ENCODE measurements at regions of chr2 and their contacts with region 1.

Region 1: DNA sequence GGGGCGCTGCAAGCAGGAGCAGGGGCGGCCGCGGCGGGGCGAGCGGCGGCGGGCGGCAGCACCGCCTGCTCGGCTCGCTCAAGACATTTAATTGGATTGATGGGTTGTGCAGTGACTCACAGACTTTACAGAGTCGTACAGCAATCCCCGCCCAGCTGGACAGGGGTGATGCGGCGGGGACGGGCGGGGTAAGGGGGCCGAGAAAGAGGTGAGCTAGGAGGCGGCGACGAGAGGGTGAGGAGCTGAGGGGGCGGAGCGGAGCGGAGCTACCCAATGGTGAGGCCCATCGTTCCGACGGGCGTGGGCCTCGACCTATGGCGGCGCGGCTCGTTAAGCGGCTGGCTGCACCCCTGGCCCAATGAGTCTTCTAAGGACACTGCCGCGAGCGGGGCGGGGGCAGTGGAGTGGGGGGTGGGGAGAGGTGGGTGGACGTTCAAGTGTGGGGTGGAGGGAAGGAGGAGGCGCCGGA is 97.1 kb upstream of the SERTAD2 start:
- DNase-seq: peak; percentile 95
- ATAC-seq: peak; percentile 90
- H3K4me3 Mint-ChIP-seq: peak overlapping the region; percentile 92
- H3K27ac Mint-ChIP-seq: peak overlapping the region; percentile 95
- H3K4me1 Mint-ChIP-seq: peaks cover 16% of the 10 kb centered on the region
- H3K27me3 Mint-ChIP-seq: no peaks in the 10 kb centered on the region

Region 2: DNA sequence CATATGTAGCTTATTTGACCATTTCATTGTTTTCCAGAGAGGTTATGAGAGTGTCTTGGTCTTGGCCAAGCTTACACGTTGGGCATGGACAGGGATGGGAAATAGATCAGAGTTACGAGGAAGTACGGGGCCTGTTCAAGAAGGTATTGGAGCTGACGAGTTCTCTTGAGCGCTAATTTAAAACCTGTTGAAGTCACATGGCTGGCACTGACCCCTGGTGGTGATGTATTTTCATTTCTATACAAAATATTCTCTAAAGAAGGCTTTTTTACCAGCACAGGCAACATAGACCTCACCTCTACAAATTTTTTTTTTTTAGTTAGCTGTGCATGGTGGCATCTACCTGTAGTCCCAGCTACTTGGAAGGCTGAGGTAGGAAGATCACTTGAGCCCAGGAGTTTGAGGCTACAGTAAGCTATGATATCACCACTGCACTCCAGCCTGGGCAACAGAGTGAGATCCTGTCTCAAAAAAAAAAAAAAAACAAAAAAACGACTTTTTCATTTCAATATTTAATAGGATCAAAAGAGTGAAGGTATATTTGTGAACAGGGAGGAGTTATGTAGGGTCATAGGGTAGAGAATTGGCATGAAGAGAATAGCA is 889.5 kb before region 1 on chr2:
- POLR2A ChIA-PET with region 1: no interaction called
- DNase-seq: peak; percentile 34
- ATAC-seq: no peak
- H3K4me3 Mint-ChIP-seq: no peak overlapping the region
- H3K27ac Mint-ChIP-seq: no peak overlapping the region
- H3K4me1 Mint-ChIP-seq: peaks cover 29% of the 10 kb centered on the region
- H3K27me3 Mint-ChIP-seq: no peaks in the 10 kb centered on the region

Region 3: DNA sequence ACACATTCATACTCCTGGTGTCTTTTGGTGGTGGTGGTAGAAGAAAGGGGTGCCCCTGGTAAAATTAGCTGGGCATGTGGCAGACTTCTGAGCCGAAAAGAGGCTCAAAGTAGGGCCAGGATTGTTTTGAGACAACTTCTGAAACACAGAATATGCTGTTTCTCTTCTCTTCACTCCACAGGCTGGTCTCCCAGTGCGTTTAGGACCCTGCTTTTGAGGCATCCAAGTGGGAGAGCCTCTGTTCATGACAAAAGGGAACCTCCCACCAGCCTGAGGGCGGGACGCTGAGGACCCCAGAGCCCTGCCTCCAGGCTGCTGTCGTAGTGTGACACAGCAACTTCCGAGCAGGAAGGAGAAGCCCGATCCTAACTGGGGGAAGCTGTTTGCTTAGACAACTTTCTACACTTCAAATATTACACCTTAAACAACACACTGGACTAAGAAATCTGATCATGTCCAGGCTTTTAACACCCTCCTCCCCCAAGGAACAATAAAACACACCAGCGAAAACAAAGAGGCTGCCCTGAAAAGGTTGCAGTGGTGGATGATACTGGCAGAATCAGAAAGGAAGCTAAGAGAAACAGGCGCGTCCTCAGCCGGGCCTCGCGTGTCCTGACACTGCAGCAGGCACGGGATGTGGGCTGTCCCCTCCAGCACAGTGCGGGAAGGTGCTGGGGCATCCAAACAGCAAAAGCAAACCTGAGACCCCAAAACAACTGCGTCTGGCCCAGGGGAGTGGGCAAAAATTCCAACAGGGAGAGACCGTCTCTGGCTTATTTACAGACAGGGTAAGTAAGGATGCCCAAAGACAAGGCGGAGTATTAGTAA is 106.5 kb before region 1 on chr2:
- POLR2A ChIA-PET with region 1: interaction called, 137 read pairs
- DNase-seq: peak; percentile 69
- ATAC-seq: peak; percentile 87
- H3K4me3 Mint-ChIP-seq: peak overlapping the region; percentile 85
- H3K27ac Mint-ChIP-seq: peak overlapping the region; percentile 87
- H3K4me1 Mint-ChIP-seq: peaks cover 79% of the 10 kb centered on the region
- H3K27me3 Mint-ChIP-seq: no peaks in the 10 kb centered on the region

Region 4: GRCh38 chr2:64666810-64667438 is 83.9 kb before region 1 on chr2:
- POLR2A ChIA-PET with region 1: interaction called, 11 read pairs
- DNase-seq: no peak
- ATAC-seq: peak; percentile 77
- H3K4me3 Mint-ChIP-seq: peak overlapping the region; percentile 46
- H3K27ac Mint-ChIP-seq: peak overlapping the region; percentile 78
- H3K4me1 Mint-ChIP-seq: peaks cover 25% of the 10 kb centered on the region
- H3K27me3 Mint-ChIP-seq: no peaks in the 10 kb centered on the region

Region 5: GRCh38 chr2:64737547-64737946 is 13.3 kb before region 1 on chr2:
- POLR2A ChIA-PET with region 1: interaction called, 39 read pairs
- DNase-seq: no peak
- ATAC-seq: peak; percentile 91
- H3K4me3 Mint-ChIP-seq: peak overlapping the region; percentile 40
- H3K27ac Mint-ChIP-seq: peak overlapping the region; percentile 36
- H3K4me1 Mint-ChIP-seq: peaks cover 29% of the 10 kb centered on the region
- H3K27me3 Mint-ChIP-seq: no peaks in the 10 kb centered on the region

Region 6: DNA sequence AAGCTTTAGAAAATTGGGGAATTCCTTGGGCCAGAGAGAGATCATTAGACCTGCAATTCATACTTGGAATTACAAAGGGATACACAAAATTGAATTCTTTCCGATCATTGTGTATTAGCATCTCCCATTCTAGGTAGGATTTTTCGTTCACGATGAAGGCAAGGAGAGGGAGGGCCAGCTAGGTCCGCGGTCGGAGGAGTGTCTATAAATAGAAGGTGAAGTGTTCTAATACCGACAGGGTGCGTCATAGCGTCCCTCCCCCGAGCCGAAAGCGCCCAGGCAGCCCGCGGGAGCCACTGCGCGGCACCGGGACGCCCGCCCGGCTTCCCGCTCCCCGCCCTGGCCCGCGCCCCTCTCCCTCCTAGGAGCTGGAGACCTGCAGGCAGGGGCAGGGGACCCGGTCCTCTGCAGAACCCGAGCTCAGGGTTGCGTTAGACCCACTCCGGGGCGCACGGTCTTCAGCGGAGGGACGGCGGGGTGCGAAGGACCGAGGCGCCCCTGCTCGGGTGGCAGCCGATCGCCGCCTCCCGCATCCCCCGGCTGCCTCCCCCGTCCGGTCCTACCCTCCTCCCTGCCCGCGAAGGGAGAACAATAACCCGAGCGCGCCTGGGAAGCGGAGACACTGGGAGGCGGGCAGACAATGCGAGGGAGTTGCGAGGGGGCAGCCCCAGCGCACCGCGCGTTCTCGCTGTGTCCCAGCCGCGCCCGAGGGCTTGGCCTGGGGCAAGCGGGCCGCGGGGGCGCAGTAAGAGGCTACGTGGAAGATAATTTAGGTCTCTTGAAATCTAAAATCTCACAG is 17.0 kb after region 1 on chr2:
- POLR2A ChIA-PET with region 1: interaction called, 54 read pairs
- DNase-seq: peak; percentile 83
- ATAC-seq: peak; percentile 85
- H3K4me3 Mint-ChIP-seq: peak overlapping the region; percentile 91
- H3K27ac Mint-ChIP-seq: peak overlapping the region; percentile 96
- H3K4me1 Mint-ChIP-seq: peaks cover 31% of the 10 kb centered on the region
- H3K27me3 Mint-ChIP-seq: no peaks in the 10 kb centered on the region

Region 7: DNA sequence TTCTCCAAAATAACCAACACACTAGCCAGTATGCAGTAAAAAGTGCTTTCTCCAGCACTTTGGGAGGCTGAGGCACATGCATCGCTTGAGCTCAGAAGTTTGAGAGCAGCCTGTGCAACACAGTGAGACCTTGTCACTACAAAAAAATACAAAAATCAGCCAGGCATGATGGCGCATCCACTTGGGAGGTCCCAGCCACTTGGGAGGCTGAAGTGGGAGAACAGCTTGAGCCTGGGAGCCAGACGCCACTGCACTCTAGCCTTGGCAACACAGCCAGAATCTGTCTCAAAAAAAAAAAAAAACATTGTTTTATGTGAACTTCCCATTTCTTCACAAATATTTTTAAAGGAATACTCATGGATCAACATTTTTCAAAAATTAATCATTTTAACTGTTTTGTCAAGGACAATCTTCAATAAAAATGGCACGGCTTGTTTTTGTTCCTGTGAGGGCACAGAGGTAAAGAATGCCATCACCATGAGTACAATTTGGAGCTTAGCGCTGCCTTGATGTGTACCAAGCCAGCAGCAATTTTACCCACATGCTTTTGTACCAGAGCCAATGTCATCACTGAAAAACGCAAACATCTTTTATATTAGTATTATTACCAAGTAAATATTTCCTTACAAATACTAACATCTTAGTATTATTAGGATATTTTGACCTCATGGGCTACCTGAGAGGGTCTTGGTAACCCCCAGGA is 352.3 kb after region 1 on chr2:
- POLR2A ChIA-PET with region 1: no interaction called
- DNase-seq: no peak
- ATAC-seq: no peak
- H3K4me3 Mint-ChIP-seq: no peak overlapping the region
- H3K27ac Mint-ChIP-seq: no peak overlapping the region
- H3K4me1 Mint-ChIP-seq: peaks cover 13% of the 10 kb centered on the region
- H3K27me3 Mint-ChIP-seq: no peaks in the 10 kb centered on the region